HEK293 (cell line): ENCODE measurements at regions of chr15 and their contacts with region 1.

Region 1: DNA sequence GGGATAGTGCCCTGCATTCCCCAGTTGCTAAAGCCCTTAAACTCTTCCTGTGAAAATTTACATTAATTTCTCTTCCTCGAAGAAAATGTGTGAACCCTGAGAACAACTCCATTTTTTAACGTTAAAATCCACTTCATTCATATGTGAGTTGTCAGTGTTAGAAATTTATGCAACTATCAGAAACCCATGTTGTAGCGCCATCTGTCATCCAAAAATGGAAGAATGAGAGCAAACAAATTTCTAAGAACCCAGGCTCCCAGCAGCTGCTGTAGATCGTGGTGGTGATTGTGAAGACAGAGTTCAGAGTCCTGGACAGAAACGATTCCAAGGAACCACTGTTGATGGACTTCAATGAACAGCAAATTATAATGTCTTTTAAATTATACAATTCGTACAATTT is 179.7 kb upstream of the NDN start:
- H3K4me3 ChIP-seq: no peak overlapping the region
- H3K27ac ChIP-seq: no peak overlapping the region
- H3K4me1 ChIP-seq: no peaks in the 10 kb centered on the region
- CTCF ChIP-seq: no peak

Region 2: GRCh38 chr15:23648920-23649515 is 217.8 kb before region 1 on chr15:
- CTCF ChIA-PET with region 1: interaction called, 11 read pairs
- POLR2A ChIA-PET with region 1: no interaction called
- H3K4me3 ChIP-seq: no peak overlapping the region
- H3K27ac ChIP-seq: no peak overlapping the region
- H3K4me1 ChIP-seq: no peaks in the 10 kb centered on the region
- CTCF ChIP-seq: no peak

Region 3: DNA sequence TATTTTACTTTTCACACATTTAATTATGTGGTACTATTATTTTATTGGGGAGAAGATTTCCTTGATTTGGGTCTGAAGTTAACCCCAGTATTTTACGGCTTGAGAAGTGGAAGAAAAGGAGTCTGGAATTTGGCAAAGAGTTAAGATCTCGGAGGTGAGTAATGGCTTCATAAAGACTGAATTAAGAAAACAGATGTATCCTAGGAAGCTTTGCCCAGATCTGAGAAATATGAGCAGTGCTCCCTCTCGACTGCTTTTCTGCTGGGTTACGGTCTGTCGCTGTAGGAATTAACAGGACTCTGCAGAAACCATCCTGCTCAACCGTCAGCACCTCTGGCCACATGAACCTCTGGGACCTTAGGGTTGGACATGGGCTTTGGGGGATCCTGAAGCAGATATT is 16.2 kb before region 1 on chr15:
- CTCF ChIA-PET with region 1: no interaction called
- POLR2A ChIA-PET with region 1: no interaction called
- H3K4me3 ChIP-seq: no peak overlapping the region
- H3K27ac ChIP-seq: no peak overlapping the region
- H3K4me1 ChIP-seq: no peaks in the 10 kb centered on the region
- CTCF ChIP-seq: no peak

Region 4: DNA sequence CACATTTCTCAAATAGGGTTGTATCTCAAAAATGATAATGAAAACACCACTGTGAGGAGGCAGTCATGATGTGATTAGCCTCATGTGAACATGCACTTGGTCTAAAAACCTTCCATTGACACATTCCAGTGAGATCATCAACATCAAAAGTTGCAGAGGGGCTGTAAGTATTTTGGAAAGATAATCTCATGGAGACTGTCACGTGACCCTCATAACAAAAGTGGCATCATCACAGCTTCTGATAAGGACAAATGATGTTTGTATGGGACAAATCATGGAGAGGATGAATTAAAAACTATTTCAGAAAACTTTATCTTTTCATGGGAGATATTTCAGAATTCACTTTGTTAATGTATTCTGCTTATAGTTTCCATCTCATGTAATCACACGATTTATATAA is 23.4 kb after region 1 on chr15:
- CTCF ChIA-PET with region 1: no interaction called
- POLR2A ChIA-PET with region 1: no interaction called
- H3K4me3 ChIP-seq: no peak overlapping the region
- H3K27ac ChIP-seq: no peak overlapping the region
- H3K4me1 ChIP-seq: no peaks in the 10 kb centered on the region
- CTCF ChIP-seq: no peak